PC-9 (cell line): ENCODE measurements at regions of chr1 and their contacts with region 1.

Region 1: DNA sequence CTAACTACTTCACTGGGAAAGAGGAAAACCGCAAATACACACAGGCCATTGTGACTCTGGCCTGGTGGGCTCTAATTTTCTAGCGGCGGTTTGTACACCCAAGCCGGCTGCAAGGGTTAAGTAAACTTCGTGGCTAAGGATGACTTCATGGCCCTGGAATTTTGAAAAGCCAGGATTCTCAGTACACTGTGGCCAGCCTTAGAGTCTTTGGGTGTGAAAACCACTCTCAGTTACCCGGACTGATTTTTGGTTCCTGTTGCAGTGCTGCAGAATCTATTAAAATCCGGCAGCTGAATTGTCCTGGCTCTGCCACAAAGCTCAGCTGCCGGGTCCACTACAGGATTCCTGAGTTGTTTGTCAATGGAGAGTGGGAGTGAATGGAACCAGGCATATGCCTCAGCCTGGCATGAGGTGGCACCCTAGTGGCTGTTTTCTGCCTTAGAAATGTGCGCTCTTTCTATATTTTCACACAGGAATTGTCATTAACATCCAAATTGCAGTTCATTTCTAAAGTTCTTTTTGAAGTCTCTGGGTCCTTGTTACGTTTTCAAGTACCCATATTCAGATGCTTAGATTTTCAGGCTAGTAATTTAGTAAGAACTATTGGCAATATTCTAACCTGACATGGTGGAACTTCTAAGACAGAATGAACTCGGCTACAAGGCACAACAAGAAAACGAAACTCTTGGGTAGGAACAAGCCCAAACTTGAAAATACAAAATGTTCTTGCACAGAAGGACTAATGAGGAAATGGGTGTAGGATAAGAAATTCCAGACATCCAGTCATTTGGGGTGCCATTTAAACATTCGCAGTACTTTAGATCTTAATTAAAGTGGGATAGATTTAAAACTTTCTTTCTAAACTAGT is 255.9 kb downstream of the NFIA start:
- DNase-seq: peak; percentile 79 to 92
- H3K4me3 ChIP-seq: peak overlapping the region; percentile 12; the same call in 1 of the 2 replicates
- H3K27ac ChIP-seq: peak overlapping the region; percentile 69
- H3K4me1 ChIP-seq: peaks cover 31% of the 10 kb centered on the region
- H3K27me3 ChIP-seq: no peaks in the 10 kb centered on the region
- CTCF ChIP-seq: peak; percentile 77

Region 2: GRCh38 chr1:59971464-59971911 is 1366.7 kb before region 1 on chr1:
- CTCF ChIA-PET with region 1: interaction called, 3 read pairs
- POLR2A ChIA-PET with region 1: no interaction called
- intact Hi-C with region 1: loop called (anchors 10 kb)
- DNase-seq: peak; percentile 50 to 74
- H3K4me3 ChIP-seq: no peak overlapping the region
- H3K27ac ChIP-seq: no peak overlapping the region
- H3K4me1 ChIP-seq: no peaks in the 10 kb centered on the region
- H3K27me3 ChIP-seq: 0 out of 2 replicates have a peak, but pooled peaks cover 4% of the 10 kb centered on the region
- CTCF ChIP-seq: peak; percentile 94

Region 3: DNA sequence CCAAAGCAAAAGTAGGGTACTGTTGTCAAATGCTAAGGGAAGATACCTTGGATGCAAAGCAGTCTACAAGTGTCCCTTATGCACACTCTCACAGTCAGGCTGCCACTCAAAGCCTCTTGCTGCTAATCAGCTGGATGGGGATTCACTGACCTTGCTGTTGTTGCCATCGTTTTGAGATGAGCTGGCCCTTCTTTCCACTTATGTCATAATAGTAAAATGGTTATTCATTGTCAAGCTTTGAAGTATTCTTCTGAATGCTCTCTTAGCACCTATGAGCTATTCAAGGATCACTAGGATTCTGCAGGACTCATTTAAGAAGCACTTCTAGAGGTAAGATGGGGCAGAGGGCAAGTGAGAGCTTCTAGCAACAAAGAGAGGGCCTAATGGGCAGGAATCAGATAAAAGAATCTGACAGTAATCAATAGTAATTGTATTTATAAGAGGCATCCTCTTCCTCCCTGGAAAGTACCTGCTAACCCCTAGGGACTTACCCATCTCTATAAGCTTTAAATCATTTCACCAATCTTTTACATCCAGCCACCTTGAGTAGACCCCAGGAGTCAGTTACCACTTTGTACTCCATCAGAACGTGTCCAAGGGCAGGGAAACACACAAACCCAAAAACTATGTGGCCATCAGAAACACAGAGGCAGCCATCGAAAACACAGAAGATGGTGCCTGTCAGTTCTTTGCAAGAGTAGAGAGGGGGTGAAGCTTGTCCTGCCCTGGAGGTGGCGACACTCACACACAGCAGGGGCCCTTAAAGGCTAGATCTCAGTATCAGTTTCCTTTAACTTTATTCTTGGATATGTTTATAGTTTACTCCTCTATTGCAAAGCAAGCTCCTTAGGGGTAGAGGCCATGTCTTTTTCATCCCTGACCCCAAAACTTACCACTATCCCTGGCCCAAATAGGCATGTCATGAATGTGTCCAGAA is 359.5 kb before region 1 on chr1:
- CTCF ChIA-PET with region 1: no interaction called
- POLR2A ChIA-PET with region 1: no interaction called
- intact Hi-C with region 1: loop called (anchors 2 kb)
- DNase-seq: peak in 1 of 2 experiments; percentile 26
- H3K4me3 ChIP-seq: no peak overlapping the region
- H3K27ac ChIP-seq: no peak overlapping the region
- H3K4me1 ChIP-seq: no peaks in the 10 kb centered on the region
- H3K27me3 ChIP-seq: no peaks in the 10 kb centered on the region
- CTCF ChIP-seq: peak; percentile 56

Region 4: DNA sequence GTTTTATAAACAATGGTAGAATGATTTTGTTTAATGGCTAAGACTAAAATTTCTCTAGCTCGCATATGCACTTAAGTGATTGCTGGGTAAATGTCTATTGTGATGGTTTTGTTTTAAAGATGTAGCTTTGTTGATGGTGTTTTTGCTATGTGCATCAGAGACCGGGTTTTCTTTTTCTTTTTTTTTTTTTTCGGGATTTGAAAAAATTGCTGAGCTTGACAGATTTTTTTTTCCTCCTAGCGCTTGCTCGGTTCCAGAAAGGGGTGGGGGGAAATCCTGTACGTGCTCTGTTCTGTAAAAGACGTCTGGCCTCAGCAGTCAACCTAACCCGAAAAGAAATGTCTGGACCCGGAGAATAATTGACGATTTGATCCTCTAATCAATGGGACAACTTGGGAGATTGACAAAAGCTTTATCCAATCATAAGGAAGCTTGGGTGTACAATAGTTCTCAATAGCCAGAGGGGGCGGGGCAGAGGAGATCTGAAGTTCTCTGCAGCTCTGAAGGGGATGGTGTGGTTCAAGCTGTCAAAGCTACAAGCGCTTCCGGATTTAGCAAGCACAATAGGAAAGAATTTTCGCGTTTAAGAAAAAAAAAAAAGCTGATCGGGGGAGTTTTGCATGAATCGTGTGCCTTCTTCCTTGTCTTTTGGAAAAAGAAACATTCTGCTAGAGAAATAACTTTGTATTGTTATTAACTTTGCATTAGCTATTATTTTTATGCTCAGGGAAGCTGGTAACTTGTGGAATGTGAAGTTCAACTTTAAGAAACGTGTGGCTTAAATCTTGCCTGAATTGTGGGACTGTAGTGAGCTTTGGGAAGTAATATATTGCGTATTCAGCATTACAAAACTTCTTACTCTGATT is 260.3 kb before region 1 on chr1:
- CTCF ChIA-PET with region 1: interaction called, 10 read pairs
- POLR2A ChIA-PET with region 1: no interaction called
- intact Hi-C with region 1: loop called (anchors 1 kb)
- DNase-seq: peak; percentile 92 to 99
- H3K4me3 ChIP-seq: peak overlapping the region; percentile 68
- H3K27ac ChIP-seq: peak overlapping the region; percentile 67
- H3K4me1 ChIP-seq: peaks cover 51% of the 10 kb centered on the region
- H3K27me3 ChIP-seq: no peaks in the 10 kb centered on the region
- CTCF ChIP-seq: no peak

Region 5: GRCh38 chr1:61184040-61184713 is 154.0 kb before region 1 on chr1:
- CTCF ChIA-PET with region 1: interaction called, 3 read pairs
- POLR2A ChIA-PET with region 1: no interaction called
- intact Hi-C with region 1: loop called (anchors 5 kb)
- DNase-seq: peak; percentile 68 to 86
- H3K4me3 ChIP-seq: no peak overlapping the region; the same call in 1 of the 2 replicates
- H3K27ac ChIP-seq: peak overlapping the region; percentile 30
- H3K4me1 ChIP-seq: peaks cover 12% of the 10 kb centered on the region
- H3K27me3 ChIP-seq: no peaks in the 10 kb centered on the region
- CTCF ChIP-seq: no peak

Region 6: GRCh38 chr1:61588736-61589672 is 250.8 kb after region 1 on chr1:
- CTCF ChIA-PET with region 1: interaction called, 3 read pairs
- POLR2A ChIA-PET with region 1: no interaction called
- intact Hi-C with region 1: loop called (anchors 5 kb)
- DNase-seq: peak; percentile 53 to 69
- H3K4me3 ChIP-seq: no peak overlapping the region
- H3K27ac ChIP-seq: no peak overlapping the region
- H3K4me1 ChIP-seq: no peaks in the 10 kb centered on the region
- H3K27me3 ChIP-seq: no peaks in the 10 kb centered on the region
- CTCF ChIP-seq: peak; percentile 90

Region 7: GRCh38 chr1:61851849-61852669 is 513.8 kb after region 1 on chr1:
- CTCF ChIA-PET with region 1: interaction called, 4 read pairs
- POLR2A ChIA-PET with region 1: no interaction called
- intact Hi-C with region 1: loop called (anchors 5 kb)
- DNase-seq: peak in 1 of 2 experiments; percentile 37
- H3K4me3 ChIP-seq: no peak overlapping the region
- H3K27ac ChIP-seq: no peak overlapping the region
- H3K4me1 ChIP-seq: no peaks in the 10 kb centered on the region
- H3K27me3 ChIP-seq: no peaks in the 10 kb centered on the region
- CTCF ChIP-seq: peak; percentile 78